AG04449 (cell line): ENCODE measurements at regions of chr17 and their contacts with region 1.

Region 1: DNA sequence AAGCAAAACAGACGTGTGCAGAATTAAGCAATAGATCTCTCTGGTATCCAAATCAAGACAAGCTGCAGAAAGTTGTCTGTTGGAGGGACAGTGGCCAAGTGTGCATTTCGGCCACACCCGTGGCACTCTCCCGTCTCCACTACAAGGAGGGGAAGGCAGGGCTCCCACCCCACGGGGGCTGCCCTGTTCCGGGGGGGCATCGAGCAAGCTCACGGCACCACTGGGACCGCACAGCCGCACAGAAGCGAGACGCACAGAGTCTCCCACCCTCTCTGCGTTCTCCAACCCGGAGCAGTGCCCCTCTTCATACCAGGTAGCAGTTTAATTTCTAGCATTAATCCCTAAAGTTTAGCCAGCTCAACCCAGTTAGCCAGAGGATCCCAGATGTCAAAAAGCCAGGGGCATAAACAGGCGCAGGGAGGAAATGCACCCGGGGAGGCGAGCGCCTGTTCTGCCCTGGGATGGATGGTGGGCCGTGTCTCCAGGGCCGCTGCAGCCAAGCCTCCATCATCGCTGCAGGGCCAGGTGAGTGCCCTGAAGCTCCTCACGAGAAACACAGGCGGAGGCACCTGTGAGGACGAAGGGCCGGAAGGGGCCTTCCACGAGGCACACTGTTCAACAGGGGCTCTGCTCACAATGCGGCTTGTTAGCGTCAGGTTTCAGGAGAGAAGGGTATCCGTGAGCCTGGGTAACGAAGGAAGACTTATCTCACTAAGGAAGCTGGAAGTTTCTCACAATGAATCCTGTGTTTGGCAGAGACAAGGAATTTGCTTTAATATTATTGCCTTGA is 42.1 kb upstream of the METRNL start:
- DNase-seq: no peak
- H3K4me3 ChIP-seq: no peak overlapping the region
- CTCF ChIP-seq: no peak

Region 2: GRCh38 chr17:83050500-83051394 is 13.5 kb after region 1 on chr17:
- CTCF ChIA-PET with region 1: interaction called, 10 read pairs
- POLR2A ChIA-PET with region 1: no interaction called
- DNase-seq: no peak
- H3K4me3 ChIP-seq: peak overlapping the region; percentile 73
- CTCF ChIP-seq: no peak